ENCODE measurements at regions of chr7 and their contacts with region 1.

Region 1: DNA sequence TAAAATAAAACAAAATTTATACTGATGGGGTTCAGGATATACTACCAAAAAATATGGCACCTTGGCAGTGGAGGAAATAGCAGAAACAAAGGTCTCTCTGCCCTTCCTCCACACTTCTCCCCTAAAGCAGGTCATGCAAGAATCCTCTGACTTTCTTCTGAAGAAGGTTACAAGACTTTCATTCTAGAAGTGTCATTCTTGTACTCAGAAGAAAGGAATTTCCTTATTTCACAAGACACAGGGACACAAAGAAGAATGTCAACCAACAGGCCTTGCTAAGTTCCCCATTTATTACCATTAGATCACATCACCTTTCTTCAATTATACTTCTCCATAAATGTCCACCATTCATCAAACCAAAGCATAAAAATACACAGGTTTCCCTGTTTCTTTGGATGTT is 470.2 kb downstream of the PAXIP1 start:
- DNase-seq: no peak

Region 2: GRCh38 chr7:154484943-154485342 is 47.8 kb before region 1 on chr7:
- intact Hi-C with region 1: no loop called
- DNase-seq: no peak

Region 3: GRCh38 chr7:156347132-156347531 is 1814.4 kb after region 1 on chr7:
- intact Hi-C with region 1: loop called in 1 of 2 experiments (anchors 10 kb)
- DNase-seq: no peak